ENCODE measurements at regions of chr10 and their contacts with region 1.

Region 1: GRCh38 chr10:124388823-124389612 is 29.7 kb downstream of the OAT start:
- DNase-seq: peak; percentile 93
- H3K4me3 Mint-ChIP-seq: no peak overlapping the region
- H3K27ac Mint-ChIP-seq: no peak overlapping the region
- H3K4me1 Mint-ChIP-seq: peaks cover 1% of the 10 kb centered on the region
- H3K27me3 Mint-ChIP-seq: no peaks in the 10 kb centered on the region

Region 2: DNA sequence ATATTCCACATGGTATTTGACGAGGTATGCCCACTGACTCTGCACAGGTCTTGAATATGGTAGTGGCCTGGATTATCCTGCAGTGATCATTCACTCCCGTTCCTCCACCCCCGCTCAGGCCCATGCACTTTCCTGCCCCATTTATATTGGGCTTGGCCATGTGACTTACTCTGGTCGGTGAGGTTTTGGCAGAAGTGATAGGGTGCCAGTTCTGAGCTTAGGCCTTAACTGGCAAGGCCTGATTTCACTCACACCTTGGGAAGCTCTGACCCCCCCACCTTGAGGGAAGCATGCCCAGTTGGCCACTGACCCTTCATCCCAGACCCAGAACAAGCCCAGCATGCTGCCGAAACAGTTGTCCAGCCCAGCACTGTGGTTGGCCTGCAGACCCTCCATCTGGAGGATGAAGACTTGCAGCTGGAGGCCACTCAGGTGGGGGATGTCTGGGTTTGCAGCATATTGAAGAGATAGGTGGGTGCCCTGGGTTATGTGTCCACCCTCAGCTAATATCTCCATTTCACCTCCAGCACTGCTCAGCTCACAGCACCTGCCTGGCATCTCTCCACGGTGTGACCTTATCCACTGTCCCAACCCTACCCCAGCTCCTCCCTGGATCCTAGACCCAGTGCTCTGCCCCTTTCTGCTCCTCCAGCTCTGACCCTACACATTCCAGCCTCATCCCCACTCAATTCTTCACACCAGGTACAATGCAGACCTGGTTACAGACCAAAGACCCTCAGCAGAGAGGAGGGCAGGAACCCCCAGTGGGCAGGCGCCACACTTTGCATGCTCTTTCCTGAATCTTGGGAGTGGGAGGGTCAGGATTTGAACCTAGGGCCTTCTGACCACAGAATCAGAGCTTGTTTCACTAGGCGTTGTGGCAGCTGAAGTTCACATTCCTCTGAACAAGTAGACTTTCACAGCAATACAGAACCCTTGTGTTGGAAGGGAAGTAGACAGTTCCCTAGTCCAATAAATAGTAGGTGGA is 157.6 kb before region 1 on chr10:
- CTCF ChIA-PET with region 1: interaction called, 19 read pairs
- POLR2A ChIA-PET with region 1: no interaction called
- DNase-seq: peak; percentile 77
- H3K4me3 Mint-ChIP-seq: peak overlapping the region; percentile 5
- H3K27ac Mint-ChIP-seq: peak overlapping the region; percentile 41
- H3K4me1 Mint-ChIP-seq: no peaks in the 10 kb centered on the region
- H3K27me3 Mint-ChIP-seq: no peaks in the 10 kb centered on the region

Region 3: GRCh38 chr10:124259139-124259825 is 129.7 kb before region 1 on chr10:
- CTCF ChIA-PET with region 1: interaction called, 25 read pairs
- POLR2A ChIA-PET with region 1: no interaction called
- DNase-seq: no peak
- H3K4me3 Mint-ChIP-seq: no peak overlapping the region
- H3K27ac Mint-ChIP-seq: no peak overlapping the region
- H3K4me1 Mint-ChIP-seq: no peaks in the 10 kb centered on the region
- H3K27me3 Mint-ChIP-seq: peaks cover 1% of the 10 kb centered on the region

Region 4: DNA sequence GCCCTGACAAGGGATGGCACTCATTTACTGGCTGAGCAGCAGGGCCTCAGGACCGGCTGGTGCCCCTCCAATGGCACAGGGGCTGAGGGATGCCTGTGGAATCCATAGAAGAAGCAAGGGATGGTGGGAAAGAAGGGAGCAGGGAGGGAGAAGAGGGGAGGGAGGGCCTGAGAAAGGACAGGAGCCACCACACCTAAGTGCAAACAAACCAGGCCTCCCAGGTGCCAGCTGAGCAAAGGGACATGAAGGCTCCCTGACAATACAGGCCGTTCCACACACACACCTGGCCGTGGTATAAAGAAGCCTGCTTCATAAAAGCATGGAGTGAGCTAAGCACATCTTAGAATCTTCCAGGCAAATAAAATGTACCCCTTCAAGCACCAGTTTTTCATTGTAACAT is 24.4 kb before region 1 on chr10:
- CTCF ChIA-PET with region 1: interaction called, 11 read pairs
- POLR2A ChIA-PET with region 1: no interaction called
- DNase-seq: no peak
- H3K4me3 Mint-ChIP-seq: no peak overlapping the region
- H3K27ac Mint-ChIP-seq: no peak overlapping the region
- H3K4me1 Mint-ChIP-seq: no peaks in the 10 kb centered on the region
- H3K27me3 Mint-ChIP-seq: peaks cover 10% of the 10 kb centered on the region

Region 5: GRCh38 chr10:124409696-124410095 is 20.7 kb after region 1 on chr10:
- CTCF ChIA-PET with region 1: interaction called, 32 read pairs
- POLR2A ChIA-PET with region 1: no interaction called
- DNase-seq: no peak
- H3K4me3 Mint-ChIP-seq: no peak overlapping the region
- H3K27ac Mint-ChIP-seq: no peak overlapping the region
- H3K4me1 Mint-ChIP-seq: no peaks in the 10 kb centered on the region
- H3K27me3 Mint-ChIP-seq: no peaks in the 10 kb centered on the region

Measured in activated CD4-positive, alpha-beta memory T cell treated with anti-CD3 and anti-CD28 coated beads, Interleukin-2, amount 10 ng/mL, durations not matched to agents 7 days and 5 days (primary cell).